Thyroid gland (tissue), 4 donors: ENCODE measurements at regions of chr15 and their contacts with region 1.

Region 1: DNA sequence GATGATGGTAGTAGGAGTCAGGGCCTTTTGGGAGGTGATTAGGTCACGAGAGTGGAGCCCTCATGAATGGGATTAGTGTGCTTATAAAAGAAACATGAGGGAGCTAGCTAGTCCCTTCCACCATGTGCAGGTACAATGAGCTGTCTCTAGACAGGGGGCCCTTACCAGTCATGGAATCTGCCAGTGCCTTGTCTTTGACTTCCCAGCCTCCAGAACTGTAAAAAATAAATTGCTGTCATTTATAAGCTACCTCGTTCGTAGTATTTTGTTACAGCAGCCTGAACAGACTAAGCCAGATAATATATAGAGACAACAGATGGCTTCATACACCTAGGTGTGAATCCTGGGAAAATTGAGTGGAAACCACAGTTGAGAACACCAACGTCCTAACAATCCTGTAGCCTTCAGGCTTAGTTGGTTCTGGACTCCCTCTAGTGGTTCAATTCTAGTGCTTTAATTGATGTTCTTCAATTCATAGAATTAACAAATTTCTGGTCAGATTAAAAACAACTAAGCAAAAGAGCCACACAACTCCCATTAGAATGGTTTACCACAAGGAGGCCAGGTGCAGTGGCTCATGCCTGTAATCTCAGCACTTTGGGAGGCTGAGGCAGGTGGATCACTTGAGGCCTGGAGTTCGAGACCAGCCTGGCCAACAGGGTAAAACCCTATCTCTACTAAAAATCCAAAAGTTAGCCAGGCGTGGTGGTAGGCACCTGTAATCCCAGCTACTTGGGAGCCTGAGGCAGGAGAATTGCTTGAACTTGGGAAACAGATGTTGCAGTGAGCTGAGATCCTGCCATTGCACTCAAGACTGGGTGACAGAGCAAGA is 21.3 kb upstream of the GATM start:
- DNase-seq: no peak
- H3K4me3 ChIP-seq: no peak overlapping the region
- H3K27ac ChIP-seq: no peak overlapping the region
- H3K4me1 ChIP-seq: peaks cover 10 to 11% of the 10 kb centered on the region in 2 donors
- H3K27me3 ChIP-seq: no peaks in the 10 kb centered on the region
- CTCF ChIP-seq: peak; percentile 40 to 84 (median 68)
- POLR2A ChIP-seq: no peak

Region 2: DNA sequence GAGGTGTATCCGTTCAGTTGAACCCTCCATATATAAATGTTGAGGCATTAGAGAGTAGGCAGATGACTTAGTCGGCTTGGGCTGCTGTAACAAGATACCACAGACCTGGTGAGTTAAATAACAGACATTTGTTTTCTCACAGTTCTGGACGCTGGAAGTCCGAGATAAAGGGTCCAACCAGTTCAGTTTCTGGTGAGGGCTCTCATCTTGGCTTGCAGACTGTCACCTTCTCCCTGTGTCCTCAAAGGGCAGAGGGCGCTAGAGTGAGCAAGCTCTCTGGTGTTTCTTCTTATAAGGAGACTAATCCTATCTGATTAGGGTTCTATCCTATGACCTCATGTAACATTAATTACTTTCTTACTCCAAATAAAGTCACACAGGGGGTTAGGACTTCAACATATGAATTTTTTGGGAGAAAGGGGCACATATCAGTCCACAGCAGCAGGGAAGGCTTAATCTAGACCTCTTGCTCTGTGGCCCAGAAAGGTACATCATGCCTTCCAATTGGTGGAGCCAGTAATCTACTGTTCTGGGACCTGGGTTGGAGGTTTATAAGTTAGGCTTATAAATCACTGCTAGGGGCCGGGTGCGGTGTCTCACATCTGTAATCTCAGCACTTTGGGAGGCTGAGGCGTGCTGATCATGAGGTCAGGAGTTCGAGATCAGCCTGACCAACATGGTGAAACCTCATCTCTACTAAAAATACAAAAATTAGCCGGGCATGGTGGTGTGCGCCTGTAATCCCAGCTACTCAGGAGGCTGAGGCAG is 173.9 kb before region 1 on chr15:
- intact Hi-C with region 1: no loop called
- DNase-seq: no peak
- H3K4me3 ChIP-seq: no peak overlapping the region
- H3K27ac ChIP-seq: no peak overlapping the region
- H3K4me1 ChIP-seq: peaks cover 5 to 15% of the 10 kb centered on the region in 2 donors
- H3K27me3 ChIP-seq: no peaks in the 10 kb centered on the region
- CTCF ChIP-seq: no peak
- POLR2A ChIP-seq: no peak

Region 3: GRCh38 chr15:45307230-45307924 is 92.2 kb before region 1 on chr15:
- intact Hi-C with region 1: loop called (anchors 5 kb)
- DNase-seq: no peak
- H3K4me3 ChIP-seq: no peak overlapping the region
- H3K27ac ChIP-seq: peak overlapping the region; percentile 47 to 54 (median 53)
- H3K4me1 ChIP-seq: peaks cover 0 to 10% of the 10 kb centered on the region in 2 donors
- H3K27me3 ChIP-seq: no peaks in the 10 kb centered on the region
- CTCF ChIP-seq: peak; percentile 25 to 87 (median 64)
- POLR2A ChIP-seq: no peak